Heart left ventricle (tissue), 16 donors: ENCODE measurements at regions of chr16 and their contacts with region 1.

Region 1: GRCh38 chr16:79601931-79602627 is 1.5 kb upstream of the MAF start:
- DNase-seq: peak; percentile 66 to 87 (median 82)
- ATAC-seq: peak; percentile 7 to 51 (median 26)
- H3K4me3 ChIP-seq: peak overlapping the region; percentile 55 to 84 (median 72)
- H3K27ac ChIP-seq: peak overlapping the region in 11 of 12 donors; percentile 74 to 96 (median 90)
- H3K4me1 ChIP-seq: peaks cover 0 to 17% (median 2%) of the 10 kb centered on the region in 12 donors
- H3K27me3 ChIP-seq: no peaks in the 10 kb centered on the region
- CTCF ChIP-seq: peak; percentile 69 to 85 (median 80)
- POLR2A ChIP-seq: no peak

Region 2: DNA sequence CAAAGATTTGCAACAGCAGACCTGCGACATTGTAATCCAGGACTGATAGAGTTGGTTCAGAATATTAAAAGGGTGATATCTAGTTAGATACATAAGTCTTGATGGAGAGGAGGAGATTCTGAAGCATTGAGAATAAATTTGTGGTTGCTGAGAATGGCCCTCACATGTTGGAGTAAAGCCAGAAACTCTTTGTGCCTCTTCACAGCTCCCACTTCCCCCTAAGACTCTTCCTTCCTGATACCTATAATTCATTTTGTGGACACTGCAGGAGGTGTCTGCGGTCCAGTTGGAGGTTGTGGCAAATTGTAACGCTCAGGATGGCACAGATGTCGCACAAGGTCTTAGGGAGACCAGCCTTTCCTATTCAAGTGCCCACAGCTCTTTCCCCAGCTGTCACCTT is 1485.1 kb before region 1 on chr16:
- intact Hi-C with region 1: loop called in 9 of 10 experiments (anchors 5 to 10 kb)
- DNase-seq: no peak
- ATAC-seq: no peak
- H3K4me3 ChIP-seq: no peak overlapping the region
- H3K27ac ChIP-seq: no peak overlapping the region
- H3K4me1 ChIP-seq: no peaks in the 10 kb centered on the region
- H3K27me3 ChIP-seq: no peaks in the 10 kb centered on the region
- CTCF ChIP-seq: no peak
- POLR2A ChIP-seq: no peak

Region 3: DNA sequence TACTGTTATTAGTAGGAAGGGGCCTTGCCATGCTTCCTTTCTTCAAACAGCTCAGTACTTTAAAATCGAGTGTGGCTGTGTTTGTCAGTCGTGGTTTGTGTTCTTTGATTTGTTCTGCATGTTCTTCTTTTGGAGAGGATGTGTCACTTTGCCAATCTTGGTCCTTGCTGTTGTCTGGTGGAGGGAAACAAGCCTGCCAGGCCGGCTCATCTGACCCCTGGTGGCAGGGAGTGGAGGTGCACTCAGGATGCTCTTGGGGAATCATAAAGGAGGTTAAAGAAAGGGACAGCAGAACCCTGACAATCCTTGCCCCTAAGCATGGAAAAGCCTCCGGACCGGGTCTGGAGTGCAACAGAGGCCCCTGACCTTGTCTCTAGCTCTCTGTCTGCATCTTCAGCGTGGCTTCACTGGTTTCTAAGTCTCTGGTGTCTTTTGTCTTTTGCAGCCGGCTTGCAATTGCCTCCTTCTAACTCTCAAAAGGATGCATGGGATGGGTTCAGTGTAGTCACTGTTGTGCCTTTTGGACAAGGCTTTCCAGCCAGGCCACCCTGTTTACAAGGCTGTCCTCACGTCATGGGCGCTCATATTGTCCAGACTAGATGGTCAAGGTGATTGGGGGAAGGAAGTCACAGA is 1366.8 kb before region 1 on chr16:
- intact Hi-C with region 1: loop called in 2 of 10 experiments (anchors 5 to 10 kb)
- DNase-seq: peak; percentile 47 to 76 (median 55)
- ATAC-seq: peak; percentile 33 to 76 (median 66)
- H3K4me3 ChIP-seq: no peak overlapping the region
- H3K27ac ChIP-seq: no peak overlapping the region
- H3K4me1 ChIP-seq: peaks cover 0 to 18% (median 5%) of the 10 kb centered on the region in 12 donors
- H3K27me3 ChIP-seq: no peaks in the 10 kb centered on the region
- CTCF ChIP-seq: peak; percentile 73 to 94 (median 87)
- POLR2A ChIP-seq: no peak

Region 4: DNA sequence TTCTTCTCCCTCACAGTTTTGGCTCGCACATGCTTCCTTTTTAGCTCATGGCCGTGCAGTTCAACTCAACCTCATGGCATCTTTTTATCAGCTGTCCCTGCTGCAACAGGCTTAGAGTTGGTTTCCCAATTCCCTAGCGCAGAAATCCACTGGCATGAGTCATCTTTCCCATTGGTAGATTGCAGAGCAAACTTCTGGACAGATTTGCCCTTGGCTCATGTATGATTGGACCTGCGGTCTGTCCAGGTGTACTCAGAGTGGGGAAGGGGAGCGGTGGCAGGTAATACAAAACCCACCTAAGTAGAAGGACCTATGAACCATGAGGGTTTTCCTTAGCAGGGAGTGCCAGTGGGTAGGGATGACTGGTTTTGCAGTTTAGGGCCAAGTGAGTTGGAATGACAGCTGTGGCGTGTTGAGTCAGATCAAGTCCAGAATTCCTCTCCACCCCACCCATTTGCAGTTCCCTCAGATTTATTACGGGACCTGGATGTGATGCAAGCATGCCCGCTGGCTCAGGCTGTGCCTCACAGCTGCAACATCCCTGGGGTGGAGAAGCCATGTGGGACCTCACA is 918.0 kb before region 1 on chr16:
- intact Hi-C with region 1: loop called in 1 of 10 experiments (anchors 10 kb)
- DNase-seq: peak; percentile 31 to 82 (median 73)
- ATAC-seq: peak; percentile 28 to 85 (median 78)
- H3K4me3 ChIP-seq: no peak overlapping the region
- H3K27ac ChIP-seq: peak overlapping the region in 10 of 12 donors; percentile 22 to 66 (median 53)
- H3K4me1 ChIP-seq: peaks cover 0 to 37% (median 2%) of the 10 kb centered on the region in 12 donors
- H3K27me3 ChIP-seq: no peaks in the 10 kb centered on the region
- CTCF ChIP-seq: no peak
- POLR2A ChIP-seq: no peak

Region 5: DNA sequence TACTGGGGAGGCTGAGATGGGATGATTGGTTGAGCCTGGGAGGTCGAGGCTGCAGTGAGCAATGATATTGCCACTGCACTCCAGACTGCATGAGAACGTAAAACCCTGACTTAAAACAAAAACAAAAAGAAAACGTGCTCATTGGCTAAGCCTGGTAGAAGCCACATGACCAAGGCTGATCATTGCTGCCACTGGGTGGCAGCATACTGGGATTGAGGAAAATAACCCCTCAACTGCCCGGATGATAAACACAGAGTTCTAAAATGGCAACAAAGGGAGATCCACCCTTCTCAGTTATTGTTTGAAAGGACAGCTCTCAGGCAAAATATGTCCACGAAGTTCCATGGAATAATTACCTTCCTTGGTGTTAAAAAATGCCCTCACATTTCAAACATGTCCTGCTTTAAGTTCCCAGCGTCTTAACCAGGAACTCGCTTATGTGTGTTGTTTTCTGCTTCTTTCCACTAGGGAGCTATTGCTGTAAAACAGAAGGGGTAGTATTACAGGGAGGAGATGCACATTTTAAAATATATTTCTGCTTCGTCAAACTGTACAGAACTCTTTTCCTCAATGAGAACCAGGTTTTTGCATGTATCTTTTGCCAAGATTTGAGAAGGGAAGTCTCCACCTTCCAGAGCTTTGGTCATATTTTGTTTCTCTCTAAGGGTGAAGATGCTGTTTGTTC is 676.9 kb before region 1 on chr16:
- intact Hi-C with region 1: loop called (anchors 2 to 10 kb)
- DNase-seq: peak in 2 of 5 donors; percentile 41 to 53
- ATAC-seq: peak in 3 of 4 donors; percentile 32 to 54 (median 44)
- H3K4me3 ChIP-seq: no peak overlapping the region
- H3K27ac ChIP-seq: no peak overlapping the region
- H3K4me1 ChIP-seq: peaks cover 0 to 3% (median 0%) of the 10 kb centered on the region in 12 donors
- H3K27me3 ChIP-seq: no peaks in the 10 kb centered on the region
- CTCF ChIP-seq: peak; percentile 24 to 64 (median 47)
- POLR2A ChIP-seq: no peak

Region 6: DNA sequence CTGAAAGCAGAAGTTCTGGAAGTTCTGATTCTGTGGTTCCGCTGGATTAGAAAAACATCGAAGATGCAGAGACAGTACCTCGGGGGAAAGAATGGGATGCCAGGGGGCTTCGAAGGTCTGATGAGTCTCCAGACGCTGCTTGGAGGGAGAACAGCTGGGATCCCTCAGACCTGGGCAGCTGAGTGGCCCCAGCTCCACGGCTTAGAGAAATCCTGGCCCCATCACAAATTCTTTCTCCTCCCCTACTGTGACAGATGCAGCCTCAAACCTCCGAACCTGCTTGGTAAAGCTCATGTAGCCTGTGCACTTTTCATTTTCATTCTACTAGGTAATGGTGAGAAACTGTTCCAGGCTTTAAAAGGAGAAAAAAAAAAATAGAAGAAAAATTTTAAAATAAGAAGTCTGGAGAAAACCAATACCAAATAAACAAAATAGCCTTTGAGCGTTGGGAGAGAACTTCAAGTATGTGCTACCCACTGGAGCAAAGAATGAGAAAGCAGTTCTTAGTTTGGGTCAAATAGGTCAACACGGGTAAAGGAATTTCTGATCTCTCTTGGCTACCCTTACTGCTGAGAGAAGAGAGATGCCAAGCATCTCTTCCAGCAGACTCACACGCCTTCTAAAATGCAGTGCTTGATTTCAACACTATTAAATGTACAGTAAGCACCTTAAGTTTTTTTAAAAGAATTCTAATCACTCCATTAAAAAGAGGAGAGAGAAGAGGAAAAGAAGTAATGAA is 21.5 kb before region 1 on chr16:
- intact Hi-C with region 1: no loop called
- DNase-seq: no peak
- ATAC-seq: no peak
- H3K4me3 ChIP-seq: no peak overlapping the region
- H3K27ac ChIP-seq: no peak overlapping the region
- H3K4me1 ChIP-seq: no peaks in the 10 kb centered on the region
- H3K27me3 ChIP-seq: peaks cover 0 to 37% (median 0%) of the 10 kb centered on the region in 9 donors
- CTCF ChIP-seq: no peak
- POLR2A ChIP-seq: no peak

Region 7: GRCh38 chr16:79767421-79768275 is 165.6 kb after region 1 on chr16:
- intact Hi-C with region 1: loop called in 3 of 10 experiments (anchors 5 to 10 kb)
- DNase-seq: peak in 2 of 5 donors; percentile 21 to 50
- ATAC-seq: peak; percentile 6 to 51 (median 17)
- H3K4me3 ChIP-seq: peak overlapping the region in 9 of 12 donors; percentile 21 to 51 (median 38)
- H3K27ac ChIP-seq: peak overlapping the region; percentile 53 to 85 (median 69)
- H3K4me1 ChIP-seq: peaks cover 0 to 35% (median 11%) of the 10 kb centered on the region in 12 donors
- H3K27me3 ChIP-seq: no peaks in the 10 kb centered on the region
- CTCF ChIP-seq: peak in 8 of 12 donors; percentile 7 to 44 (median 18)
- POLR2A ChIP-seq: no peak